Activated CD4-positive, alpha-beta T cell treated with anti-CD3 and anti-CD28 coated beads for 36 hours (primary cell): ENCODE measurements at regions of chr16 and their contacts with region 1.

Region 1: DNA sequence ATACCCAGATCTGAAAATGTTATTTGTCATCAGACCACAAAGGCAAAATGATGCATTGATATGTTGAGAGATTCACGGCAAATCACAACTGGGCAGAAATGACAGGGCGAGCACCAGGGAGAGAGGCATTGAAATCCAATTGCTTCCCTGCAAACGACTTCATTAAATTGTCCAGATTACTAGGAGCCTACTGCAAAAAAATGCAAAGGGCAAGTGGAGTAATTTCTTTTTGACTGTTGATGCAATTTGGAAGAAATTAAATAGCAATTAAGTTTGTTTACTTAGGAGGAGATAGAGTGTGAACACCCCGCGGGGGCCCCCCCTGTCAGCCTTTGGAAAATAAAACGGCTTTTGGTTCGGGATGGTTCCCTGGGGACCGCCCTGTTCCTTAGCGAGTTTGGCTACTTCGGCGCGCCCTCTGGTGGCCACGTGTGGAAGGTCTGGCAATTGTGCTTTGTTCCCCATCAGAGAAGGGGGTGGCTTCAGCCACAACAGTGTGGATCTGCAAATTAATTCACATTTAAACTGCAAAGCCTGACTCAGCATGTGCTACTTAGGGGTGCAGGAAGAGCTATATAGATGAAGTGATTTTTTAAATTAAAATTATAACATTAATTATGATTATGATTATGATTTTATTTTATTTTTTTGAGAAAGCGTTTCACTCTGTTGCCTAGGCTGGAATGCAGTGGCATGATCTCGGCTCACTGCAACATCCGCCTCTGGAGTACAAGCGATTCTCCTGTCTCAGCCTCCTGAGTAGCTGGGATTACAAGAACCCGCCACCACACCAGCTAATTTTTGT is 14.5 kb upstream of the TMC7 start:
- DNase-seq: peak; percentile 89
- ATAC-seq: peak; percentile 94
- H3K4me3 Mint-ChIP-seq: no peak overlapping the region
- H3K27ac Mint-ChIP-seq: peak overlapping the region; percentile 16
- H3K4me1 Mint-ChIP-seq: peaks cover 6% of the 10 kb centered on the region
- H3K27me3 Mint-ChIP-seq: no peaks in the 10 kb centered on the region

Region 2: DNA sequence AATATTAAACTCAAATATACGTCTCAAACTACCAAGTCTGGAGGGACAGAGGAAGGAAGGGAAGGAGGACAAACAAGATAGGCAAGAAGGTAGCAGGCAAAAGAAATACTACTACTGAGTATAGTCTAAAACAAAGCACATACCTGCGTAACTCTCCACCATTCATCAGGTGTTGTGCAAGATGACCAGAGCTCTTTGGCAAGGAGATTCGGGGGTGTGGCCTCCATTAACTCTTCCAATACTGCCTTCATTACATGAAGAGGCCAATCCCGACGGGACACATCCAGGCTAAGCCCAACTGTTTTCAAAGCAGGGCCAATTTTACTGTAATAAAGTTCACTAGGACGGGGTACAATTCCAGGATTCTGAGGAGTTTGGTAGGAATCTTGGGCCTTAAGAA is 129.7 kb before region 1 on chr16:
- CTCF ChIA-PET with region 1: no interaction called
- POLR2A ChIA-PET with region 1: no interaction called
- intact Hi-C with region 1: loop called in 1 of 2 experiments (anchors 10 kb)
- DNase-seq: no peak
- ATAC-seq: no peak
- H3K4me3 Mint-ChIP-seq: no peak overlapping the region
- H3K27ac Mint-ChIP-seq: no peak overlapping the region
- H3K4me1 Mint-ChIP-seq: peaks cover 16% of the 10 kb centered on the region
- H3K27me3 Mint-ChIP-seq: no peaks in the 10 kb centered on the region

Region 3: DNA sequence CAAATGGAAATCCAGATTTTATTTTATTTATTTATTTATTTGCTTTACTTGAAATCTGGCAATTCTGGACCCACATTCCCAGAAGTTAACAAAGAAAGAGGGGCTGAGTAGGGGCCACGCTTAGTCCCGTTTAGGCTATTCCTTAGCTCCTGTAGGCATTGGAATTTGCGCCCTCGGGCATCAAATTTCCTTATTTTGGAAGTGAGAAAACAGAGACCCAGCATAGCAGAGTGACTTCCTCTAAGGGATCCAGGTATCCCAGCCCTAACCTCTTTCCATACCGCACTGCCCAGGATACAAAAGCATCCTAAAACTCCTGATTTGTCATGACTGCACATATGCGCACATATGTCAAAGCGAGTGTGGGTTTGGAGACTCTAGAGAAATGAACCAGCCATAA is 24.0 kb before region 1 on chr16:
- CTCF ChIA-PET with region 1: interaction called, 3 read pairs
- POLR2A ChIA-PET with region 1: no interaction called
- intact Hi-C with region 1: loop called in 1 of 2 experiments (anchors 2 kb)
- DNase-seq: no peak
- ATAC-seq: no peak
- H3K4me3 Mint-ChIP-seq: no peak overlapping the region
- H3K27ac Mint-ChIP-seq: no peak overlapping the region
- H3K4me1 Mint-ChIP-seq: peaks cover 11% of the 10 kb centered on the region
- H3K27me3 Mint-ChIP-seq: peaks cover 1% of the 10 kb centered on the region